Activated CD4-positive, alpha-beta memory T cell treated with anti-CD3 and anti-CD28 coated beads for 36 hours (primary cell): ENCODE measurements at regions of chr1 and their contacts with region 1.

Region 1: GRCh38 chr1:35769759-35770446 is at the start of gene CLSPN:
- DNase-seq: peak; percentile 98
- H3K4me3 Mint-ChIP-seq: peak within 1 kb of the TSS; percentile 92
- H3K27ac Mint-ChIP-seq: peak within 1 kb of the TSS; percentile 97
- H3K4me1 Mint-ChIP-seq: peaks cover 8% of the 10 kb centered on the region
- H3K27me3 Mint-ChIP-seq: no peaks in the 10 kb centered on the region
- total RNA-seq, gene CLSPN: 49.9 to 55.1 TPM

Region 2: DNA sequence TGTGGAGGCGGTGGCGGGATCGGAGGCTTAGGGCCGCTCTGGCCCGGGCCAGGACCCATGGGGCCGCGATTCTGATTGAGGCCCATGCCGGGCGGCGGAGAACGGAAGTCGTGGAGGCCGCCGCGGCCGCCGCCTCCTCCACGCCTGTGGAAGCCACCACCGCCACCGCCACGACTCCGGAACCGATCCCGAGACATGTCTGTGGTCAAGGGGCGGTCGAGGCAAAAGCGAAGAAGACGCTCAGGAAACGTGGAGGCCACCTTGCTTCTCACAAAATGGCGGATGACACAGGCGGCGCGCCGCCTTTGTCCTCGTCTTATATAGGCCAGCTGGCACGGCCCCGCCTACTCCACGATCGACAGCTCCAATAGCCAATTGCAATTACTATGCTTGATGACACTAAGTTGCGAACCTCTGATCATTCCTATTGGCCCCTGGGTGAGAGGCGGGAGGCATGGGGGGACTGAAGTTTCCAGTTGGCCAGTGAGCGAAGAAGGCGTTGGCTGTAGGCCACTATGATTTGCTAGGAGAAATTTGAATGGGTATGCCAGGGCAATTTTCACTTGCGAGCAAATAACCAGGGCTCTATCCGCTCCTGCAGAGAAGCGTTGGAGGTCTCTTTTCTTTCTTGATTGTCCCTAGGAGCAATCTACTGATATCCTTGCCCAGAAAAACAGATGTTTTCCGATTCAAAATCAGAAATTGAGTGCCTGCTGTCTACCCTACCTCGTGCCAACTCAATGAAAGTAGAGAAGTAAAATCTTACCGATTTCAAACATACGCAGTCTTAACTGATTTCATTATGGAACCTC is 576.8 kb before region 1 on chr1 and contains the start of gene SFPQ:
- CTCF ChIA-PET with region 1: no interaction called
- POLR2A ChIA-PET with region 1: interaction called, 3 read pairs
- intact Hi-C with region 1: loop called (anchors 5 kb)
- DNase-seq: peak; percentile 98
- H3K4me3 Mint-ChIP-seq: peak within 1 kb of the TSS; percentile 95
- H3K27ac Mint-ChIP-seq: peak within 1 kb of the TSS; percentile 98
- H3K4me1 Mint-ChIP-seq: peaks cover 35% of the 10 kb centered on the region
- H3K27me3 Mint-ChIP-seq: no peaks in the 10 kb centered on the region
- total RNA-seq, gene SFPQ: 259 to 275 TPM

Region 3: DNA sequence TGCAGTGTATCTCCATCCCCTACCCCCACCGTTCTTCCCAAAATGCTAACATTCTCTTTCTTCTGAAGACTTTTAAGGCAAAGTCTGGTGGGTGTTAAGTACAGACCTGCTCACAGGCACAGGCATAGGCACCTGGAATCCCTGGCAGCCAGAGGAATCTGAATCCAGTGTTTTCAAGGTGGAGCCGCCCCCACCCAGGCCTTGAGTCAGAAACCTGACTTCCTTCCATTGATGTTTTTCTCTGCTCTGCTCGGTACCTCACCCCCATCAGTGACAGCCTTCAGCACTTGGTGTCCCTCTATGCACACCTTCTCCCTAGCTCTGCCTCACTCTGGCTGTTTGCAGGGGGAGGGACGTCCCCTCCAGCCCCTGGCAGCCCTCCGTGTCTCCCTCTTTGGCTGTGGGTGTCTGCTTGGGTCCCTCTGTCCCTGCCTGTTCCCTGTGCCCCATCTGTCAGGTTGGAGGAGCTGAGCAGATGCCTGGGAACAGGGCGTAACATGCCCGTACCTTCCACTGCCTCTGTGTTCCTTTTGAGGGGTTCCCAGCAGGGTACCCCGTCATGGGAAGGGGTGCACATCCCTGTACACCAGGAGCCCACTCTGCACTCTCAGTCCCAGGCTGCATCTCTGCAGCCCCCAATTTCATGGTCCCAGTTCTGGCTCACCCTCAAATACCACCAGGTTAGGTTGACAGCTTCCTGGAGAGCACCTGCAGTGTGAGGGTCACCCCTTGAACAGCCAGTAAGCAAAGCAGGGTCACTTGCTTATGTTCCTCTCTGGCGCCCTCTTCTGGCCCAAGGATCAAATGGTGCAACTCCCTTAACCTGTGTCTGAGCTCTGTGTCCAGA is 205.6 kb before region 1 on chr1:
- CTCF ChIA-PET with region 1: interaction called, 18 read pairs
- POLR2A ChIA-PET with region 1: interaction called, 4 read pairs
- intact Hi-C with region 1: loop called (anchors 1 kb)
- DNase-seq: peak; percentile 87
- H3K4me3 Mint-ChIP-seq: no peak overlapping the region
- H3K27ac Mint-ChIP-seq: peak overlapping the region; percentile 44
- H3K4me1 Mint-ChIP-seq: peaks cover 22% of the 10 kb centered on the region
- H3K27me3 Mint-ChIP-seq: no peaks in the 10 kb centered on the region

Region 4: DNA sequence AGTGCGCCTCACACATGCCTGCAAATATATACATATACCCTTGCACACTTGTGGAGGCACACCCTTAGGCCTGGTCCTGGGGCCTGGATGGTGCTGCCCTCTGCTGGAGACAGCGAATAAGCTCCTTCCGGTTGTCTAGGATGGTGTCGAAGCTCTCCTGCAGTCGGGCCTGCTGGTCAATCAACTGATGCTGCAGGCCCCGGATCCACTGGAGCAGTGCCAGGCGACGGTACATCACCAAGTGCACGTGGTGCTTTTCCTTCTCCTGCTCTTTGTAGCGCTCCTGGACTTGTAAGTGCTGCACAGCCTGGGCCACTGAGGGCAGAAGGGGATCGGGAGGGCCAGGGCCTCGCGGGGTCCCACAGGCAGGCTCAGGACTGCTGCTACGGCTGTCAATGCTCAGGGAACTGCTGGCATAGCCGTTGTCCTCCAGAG is 54.3 kb before region 1 on chr1:
- CTCF ChIA-PET with region 1: interaction called, 15 read pairs
- POLR2A ChIA-PET with region 1: interaction called, 7 read pairs
- intact Hi-C with region 1: loop called (anchors 2 kb)
- DNase-seq: peak; percentile 86
- H3K4me3 Mint-ChIP-seq: no peak overlapping the region
- H3K27ac Mint-ChIP-seq: no peak overlapping the region
- H3K4me1 Mint-ChIP-seq: peaks cover 32% of the 10 kb centered on the region
- H3K27me3 Mint-ChIP-seq: no peaks in the 10 kb centered on the region

Region 5: GRCh38 chr1:35807614-35808449 is 37.9 kb after region 1 on chr1 and contains the start of gene AGO4:
- CTCF ChIA-PET with region 1: interaction called, 7 read pairs
- POLR2A ChIA-PET with region 1: interaction called, 3 read pairs
- intact Hi-C with region 1: loop called (anchors 5 kb)
- DNase-seq: peak; percentile 41
- H3K4me3 Mint-ChIP-seq: peak within 1 kb of the TSS; percentile 86
- H3K27ac Mint-ChIP-seq: peak within 1 kb of the TSS; percentile 81
- H3K4me1 Mint-ChIP-seq: peaks cover 36% of the 10 kb centered on the region
- H3K27me3 Mint-ChIP-seq: no peaks in the 10 kb centered on the region
- total RNA-seq, gene AGO4: 5.1 to 6.0 TPM